Heart left ventricle (tissue), 16 donors: ENCODE measurements at regions of chr3 and their contacts with region 1.

Region 1: GRCh38 chr3:81643721-81644120 is 117.7 kb downstream of the GBE1 start:
- DNase-seq: no peak
- ATAC-seq: peak; percentile 69 to 81 (median 74)
- H3K4me3 ChIP-seq: no peak overlapping the region
- H3K27ac ChIP-seq: no peak overlapping the region
- H3K4me1 ChIP-seq: peaks cover 0 to 11% (median 0%) of the 10 kb centered on the region in 12 donors
- H3K27me3 ChIP-seq: no peaks in the 10 kb centered on the region
- CTCF ChIP-seq: peak in 9 of 12 donors; percentile 22 to 56 (median 42)
- POLR2A ChIP-seq: no peak

Region 2: DNA sequence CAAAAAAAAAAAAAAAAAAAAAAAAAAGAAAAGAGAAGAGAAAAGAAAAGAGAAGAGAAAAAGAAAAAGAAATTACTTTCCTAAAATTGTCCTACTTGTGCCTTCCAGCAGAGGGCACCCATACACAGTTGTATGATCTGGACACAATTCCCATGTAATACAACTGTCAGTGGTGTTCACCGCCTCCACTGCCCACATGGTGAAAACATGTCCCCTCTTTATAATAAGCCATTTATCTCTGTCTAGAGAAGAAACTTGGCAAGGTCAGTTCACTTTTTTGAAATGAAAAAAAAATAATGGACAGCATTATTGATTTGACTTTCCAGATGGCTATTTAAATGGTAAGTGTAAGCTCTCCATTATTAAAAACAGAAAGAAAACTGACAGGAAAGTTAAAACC is 341.7 kb before region 1 on chr3:
- intact Hi-C with region 1: loop called in 4 of 10 experiments (anchors 5 to 10 kb)
- DNase-seq: peak in 1 of 5 donors; percentile 12
- ATAC-seq: peak in 3 of 4 donors; percentile 48 to 72 (median 63)
- H3K4me3 ChIP-seq: no peak overlapping the region
- H3K27ac ChIP-seq: no peak overlapping the region
- H3K4me1 ChIP-seq: no peaks in the 10 kb centered on the region
- H3K27me3 ChIP-seq: no peaks in the 10 kb centered on the region
- CTCF ChIP-seq: peak; percentile 39 to 71 (median 58)
- POLR2A ChIP-seq: no peak

Region 3: DNA sequence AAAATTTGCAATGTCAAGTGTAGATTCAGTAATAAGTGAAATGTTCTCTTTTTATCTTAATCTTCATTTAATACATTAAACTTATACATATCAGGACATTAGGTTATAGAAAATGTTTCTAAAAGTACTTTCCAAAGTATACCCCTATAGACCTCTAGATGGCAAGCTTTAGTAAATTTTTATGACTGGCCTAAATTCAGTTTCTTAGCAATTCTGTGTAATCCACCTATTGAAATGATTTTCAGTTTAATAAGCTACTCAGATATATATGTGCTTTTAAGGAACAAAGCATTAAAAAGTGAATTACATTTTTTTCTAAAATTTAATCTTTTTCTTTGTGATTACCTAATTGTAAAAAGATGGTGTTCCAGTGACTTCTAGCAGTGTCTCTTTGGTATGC is 224.5 kb before region 1 on chr3:
- intact Hi-C with region 1: loop called in 4 of 10 experiments (anchors 5 to 10 kb)
- DNase-seq: no peak
- ATAC-seq: no peak
- H3K4me3 ChIP-seq: no peak overlapping the region
- H3K27ac ChIP-seq: no peak overlapping the region
- H3K4me1 ChIP-seq: no peaks in the 10 kb centered on the region
- H3K27me3 ChIP-seq: no peaks in the 10 kb centered on the region
- CTCF ChIP-seq: peak; percentile 24 to 63 (median 52)
- POLR2A ChIP-seq: no peak

Region 4: DNA sequence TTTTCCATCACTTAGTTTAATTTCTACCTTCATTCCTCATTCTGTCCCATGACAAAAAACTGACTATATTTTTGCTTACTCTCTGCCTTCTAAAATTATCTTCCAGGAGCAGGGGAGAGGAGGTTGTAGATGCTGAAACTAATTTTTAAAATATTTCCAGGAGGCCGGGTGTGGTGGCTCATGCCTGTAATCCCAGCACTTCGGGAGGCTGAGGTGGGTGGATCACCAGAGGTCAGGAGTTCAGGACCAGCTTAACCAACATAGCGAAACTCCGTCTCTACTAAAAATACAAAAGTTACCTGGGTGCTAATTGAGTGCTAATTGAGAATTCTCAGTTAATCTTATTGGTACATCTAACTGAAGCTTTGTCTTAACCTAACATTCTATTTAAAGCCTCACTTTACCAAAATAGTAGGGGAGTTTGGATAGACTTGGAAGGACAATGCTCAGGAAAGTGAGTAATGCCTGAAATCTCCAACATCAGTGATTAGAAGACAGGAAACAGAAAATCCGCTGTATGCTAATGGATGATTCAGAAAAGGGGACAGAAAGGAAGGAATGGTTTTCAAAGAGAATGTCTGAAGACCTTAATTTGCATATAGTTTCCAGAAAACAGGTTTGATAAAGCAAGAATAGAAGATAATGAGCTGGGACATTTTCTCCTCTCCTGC is 218.4 kb before region 1 on chr3:
- intact Hi-C with region 1: loop called in 3 of 10 experiments (anchors 10 kb)
- DNase-seq: no peak
- ATAC-seq: no peak
- H3K4me3 ChIP-seq: no peak overlapping the region
- H3K27ac ChIP-seq: no peak overlapping the region
- H3K4me1 ChIP-seq: no peaks in the 10 kb centered on the region
- H3K27me3 ChIP-seq: no peaks in the 10 kb centered on the region
- CTCF ChIP-seq: no peak
- POLR2A ChIP-seq: no peak

Region 5: GRCh38 chr3:81490541-81491288 is 153.0 kb before region 1 on chr3:
- intact Hi-C with region 1: loop called in 3 of 10 experiments (anchors 5 kb)
- DNase-seq: peak; percentile 41 to 84 (median 71)
- ATAC-seq: peak; percentile 55 to 92 (median 90)
- H3K4me3 ChIP-seq: no peak overlapping the region
- H3K27ac ChIP-seq: peak overlapping the region in 2 of 12 donors; percentile 30 to 31
- H3K4me1 ChIP-seq: peaks cover 0 to 29% (median 8%) of the 10 kb centered on the region in 12 donors
- H3K27me3 ChIP-seq: no peaks in the 10 kb centered on the region
- CTCF ChIP-seq: peak; percentile 63 to 82 (median 70)
- POLR2A ChIP-seq: no peak

Region 6: GRCh38 chr3:81581966-81582599 is 61.6 kb before region 1 on chr3:
- intact Hi-C with region 1: loop called in 1 of 10 experiments (anchors 5 kb)
- DNase-seq: peak in 1 of 5 donors; percentile 19
- ATAC-seq: peak in 3 of 4 donors; percentile 47 to 72 (median 52)
- H3K4me3 ChIP-seq: no peak overlapping the region
- H3K27ac ChIP-seq: no peak overlapping the region
- H3K4me1 ChIP-seq: peaks cover 0 to 11% (median 0%) of the 10 kb centered on the region in 12 donors
- H3K27me3 ChIP-seq: no peaks in the 10 kb centered on the region
- CTCF ChIP-seq: peak; percentile 32 to 69 (median 52)
- POLR2A ChIP-seq: no peak

Region 7: DNA sequence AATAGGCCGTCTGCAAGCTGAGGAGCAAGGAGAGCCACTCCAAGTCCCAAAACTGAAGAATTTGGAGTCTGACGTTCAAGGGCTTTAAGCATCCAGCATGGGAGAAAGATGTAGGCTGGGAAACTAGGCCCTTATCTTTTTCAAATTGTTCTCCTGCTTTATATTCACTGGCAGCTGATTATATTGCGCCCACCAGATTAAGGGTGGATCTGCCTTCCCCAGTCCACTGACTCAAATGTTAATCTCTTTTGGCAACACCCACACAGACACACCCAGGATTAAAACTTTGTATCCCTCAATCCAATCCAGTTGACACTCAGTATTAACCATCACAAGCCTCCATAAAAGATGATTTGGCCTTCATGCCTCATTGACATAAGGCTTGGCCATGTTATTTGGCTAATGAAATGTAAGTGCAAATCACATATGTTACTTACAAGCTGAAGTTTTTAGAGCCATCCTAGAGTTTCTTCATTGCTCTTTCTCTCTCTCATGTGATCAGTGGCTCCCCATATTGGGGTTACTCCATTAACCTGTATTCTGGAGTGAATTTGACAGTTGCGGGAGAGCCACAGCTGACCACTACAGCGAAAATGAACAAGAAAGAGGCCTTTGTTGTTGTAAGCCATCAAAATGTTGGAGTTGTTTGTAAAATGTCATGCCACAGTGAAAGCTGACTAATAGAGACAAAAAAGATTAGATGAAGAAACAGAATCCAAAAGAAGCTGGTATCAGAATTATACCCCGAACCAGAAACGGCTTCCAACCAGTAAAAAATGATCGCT is 56.0 kb after region 1 on chr3:
- intact Hi-C with region 1: no loop called
- DNase-seq: no peak
- ATAC-seq: no peak
- H3K4me3 ChIP-seq: no peak overlapping the region
- H3K27ac ChIP-seq: no peak overlapping the region
- H3K4me1 ChIP-seq: no peaks in the 10 kb centered on the region
- H3K27me3 ChIP-seq: no peaks in the 10 kb centered on the region
- CTCF ChIP-seq: no peak
- POLR2A ChIP-seq: no peak

Region 8: GRCh38 chr3:81758275-81758674 is 114.6 kb after region 1 on chr3:
- intact Hi-C with region 1: no loop called
- DNase-seq: peak in 1 of 5 donors; percentile 28
- ATAC-seq: no peak
- H3K4me3 ChIP-seq: no peak overlapping the region
- H3K27ac ChIP-seq: peak overlapping the region in 8 of 12 donors; percentile 12 to 100 (median 98)
- H3K4me1 ChIP-seq: peaks cover 0 to 62% (median 42%) of the 10 kb centered on the region in 12 donors
- H3K27me3 ChIP-seq: no peaks in the 10 kb centered on the region
- CTCF ChIP-seq: no peak
- POLR2A ChIP-seq: no peak